Activated CD4-positive, alpha-beta memory T cell treated with anti-CD3 and anti-CD28 coated beads for 36 hours (primary cell): ENCODE measurements at regions of chrX and their contacts with region 1.

Region 1: DNA sequence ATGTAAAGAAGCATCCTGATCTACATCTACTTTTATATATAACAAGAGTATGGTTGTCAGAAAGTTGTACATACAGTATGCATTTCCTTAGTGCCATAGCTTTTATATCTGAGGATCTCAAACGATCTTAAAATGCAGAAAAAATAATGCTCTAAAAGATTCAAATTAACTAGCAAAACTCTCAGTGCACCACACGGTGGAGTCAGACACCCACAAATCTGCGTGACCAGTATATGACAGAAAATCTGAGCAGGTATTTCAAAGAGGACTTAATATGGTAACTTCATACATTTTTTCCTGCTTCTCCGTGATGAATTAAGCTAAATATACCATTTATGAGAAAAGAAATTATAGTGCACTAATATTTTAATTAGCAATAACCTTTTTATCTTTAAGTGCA is 803.0 kb downstream of the DMD start:
- DNase-seq: peak; percentile 8
- H3K4me3 Mint-ChIP-seq: no peak overlapping the region
- H3K27ac Mint-ChIP-seq: no peak overlapping the region
- H3K4me1 Mint-ChIP-seq: no peaks in the 10 kb centered on the region
- H3K27me3 Mint-ChIP-seq: no peaks in the 10 kb centered on the region

Region 2: GRCh38 chrX:32395878-32396277 is 12.5 kb before region 1 on chrX:
- CTCF ChIA-PET with region 1: no interaction called
- POLR2A ChIA-PET with region 1: no interaction called
- intact Hi-C with region 1: no loop called
- DNase-seq: no peak
- H3K4me3 Mint-ChIP-seq: no peak overlapping the region
- H3K27ac Mint-ChIP-seq: no peak overlapping the region
- H3K4me1 Mint-ChIP-seq: no peaks in the 10 kb centered on the region
- H3K27me3 Mint-ChIP-seq: peaks cover 1% of the 10 kb centered on the region

Region 3: DNA sequence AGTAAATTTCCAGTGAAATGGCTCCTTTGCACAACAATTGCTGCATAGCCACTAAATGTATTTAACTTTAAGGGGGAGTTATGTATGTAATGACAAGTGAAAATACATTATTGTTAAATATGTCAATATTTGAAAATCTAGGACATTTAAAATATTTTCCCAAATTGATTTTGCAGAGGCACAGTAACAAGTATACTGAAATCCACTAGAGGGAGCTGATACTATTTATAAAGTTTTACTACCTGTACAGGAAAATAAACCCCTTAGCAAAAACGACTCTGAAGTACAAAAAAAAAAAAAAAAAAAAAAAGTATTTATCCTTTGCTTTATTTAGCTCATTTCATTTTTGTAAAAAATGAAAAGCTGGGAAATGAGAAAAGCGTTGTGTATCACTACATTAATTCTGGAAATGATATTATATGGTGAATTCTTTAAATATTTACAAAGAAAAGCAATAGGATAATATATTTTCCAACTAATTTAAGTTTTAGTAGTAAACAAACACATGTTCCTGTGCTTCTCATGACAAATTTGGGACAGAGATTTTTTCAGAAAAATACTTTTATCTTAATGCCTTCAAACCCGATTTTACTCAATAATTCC is 75.2 kb after region 1 on chrX:
- CTCF ChIA-PET with region 1: no interaction called
- POLR2A ChIA-PET with region 1: no interaction called
- intact Hi-C with region 1: loop called (anchors 2 kb)
- DNase-seq: no peak
- H3K4me3 Mint-ChIP-seq: no peak overlapping the region
- H3K27ac Mint-ChIP-seq: no peak overlapping the region
- H3K4me1 Mint-ChIP-seq: no peaks in the 10 kb centered on the region
- H3K27me3 Mint-ChIP-seq: peaks cover 2% of the 10 kb centered on the region

Region 4: GRCh38 chrX:33379839-33380238 is 971.5 kb after region 1 on chrX:
- CTCF ChIA-PET with region 1: no interaction called
- POLR2A ChIA-PET with region 1: no interaction called
- intact Hi-C with region 1: no loop called
- DNase-seq: no peak
- H3K4me3 Mint-ChIP-seq: no peak overlapping the region
- H3K27ac Mint-ChIP-seq: no peak overlapping the region
- H3K4me1 Mint-ChIP-seq: no peaks in the 10 kb centered on the region
- H3K27me3 Mint-ChIP-seq: no peaks in the 10 kb centered on the region